Mammary epithelial cell (primary cell): ENCODE measurements at regions of chr13 and their contacts with region 1.

Region 1: GRCh38 chr13:113350065-113350937 is 13.6 kb downstream of the GRTP1 start:
- DNase-seq: peak; percentile 26
- H3K4me3 ChIP-seq: no peak overlapping the region
- H3K27ac ChIP-seq: no peak overlapping the region
- H3K4me1 ChIP-seq: no peaks in the 10 kb centered on the region
- H3K27me3 ChIP-seq: no peaks in the 10 kb centered on the region
- CTCF ChIP-seq: peak in 1 of 2 donors; percentile 21

Region 2: DNA sequence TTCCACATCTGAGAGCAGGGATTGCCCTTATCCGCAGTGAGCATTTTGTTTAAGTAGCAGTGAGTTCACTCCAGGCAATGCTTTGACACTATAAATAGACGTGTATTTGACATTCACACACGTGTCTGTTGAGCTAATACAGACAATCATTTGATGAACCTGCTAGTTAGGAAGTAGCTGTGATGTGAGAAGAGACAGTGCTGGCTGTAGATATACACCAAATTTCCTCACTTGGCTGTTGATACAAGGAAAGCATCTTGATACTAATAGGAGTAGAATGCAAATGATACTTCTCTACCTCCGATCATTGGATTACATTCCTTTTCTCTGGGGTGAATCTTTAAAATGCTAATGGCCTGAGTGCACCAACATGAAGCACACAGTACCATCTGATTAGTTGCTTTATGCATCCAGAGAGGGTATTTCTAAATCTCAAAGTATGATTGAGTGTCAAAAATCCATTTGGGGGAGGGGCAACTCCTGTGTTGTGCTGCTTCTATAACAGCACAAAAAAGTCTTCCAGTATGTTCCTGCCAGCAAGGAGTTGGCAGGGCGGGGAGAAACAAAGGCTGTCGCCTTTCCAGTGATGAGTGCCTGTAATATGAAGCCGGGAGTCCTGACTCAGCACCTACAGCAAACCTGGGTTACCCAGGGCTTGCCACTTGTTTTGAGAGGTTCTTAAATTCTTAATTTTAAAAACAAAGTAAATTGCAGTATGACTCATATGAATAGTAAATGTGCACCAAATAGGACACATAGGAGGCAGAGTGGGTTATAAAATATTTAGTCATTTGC is 133.8 kb before region 1 on chr13:
- CTCF ChIA-PET with region 1: no interaction called
- dilution Hi-C with region 1: no loop called
- in situ Hi-C with region 1: no loop called
- intact Hi-C with region 1: no loop called
- DNase-seq: peak; percentile 72
- H3K4me3 ChIP-seq: no peak overlapping the region
- H3K27ac ChIP-seq: no peak overlapping the region
- H3K4me1 ChIP-seq: peaks cover 14% of the 10 kb centered on the region
- H3K27me3 ChIP-seq: no peaks in the 10 kb centered on the region
- CTCF ChIP-seq: no peak

Region 3: GRCh38 chr13:113393563-113394338 is 43.5 kb after region 1 on chr13:
- CTCF ChIA-PET with region 1: no interaction called
- dilution Hi-C with region 1: no loop called
- in situ Hi-C with region 1: no loop called
- intact Hi-C with region 1: loop called (anchors 1 kb)
- DNase-seq: peak; percentile 54
- H3K4me3 ChIP-seq: peak overlapping the region; percentile 39 to 58 (median 57)
- H3K27ac ChIP-seq: no peak overlapping the region
- H3K4me1 ChIP-seq: peaks cover 12% of the 10 kb centered on the region
- H3K27me3 ChIP-seq: peaks cover under 1% of the 10 kb centered on the region
- CTCF ChIP-seq: peak; percentile 45 to 62